WTC11 (cell line): ENCODE measurements at regions of chr20 and their contacts with region 1.

Region 1: DNA sequence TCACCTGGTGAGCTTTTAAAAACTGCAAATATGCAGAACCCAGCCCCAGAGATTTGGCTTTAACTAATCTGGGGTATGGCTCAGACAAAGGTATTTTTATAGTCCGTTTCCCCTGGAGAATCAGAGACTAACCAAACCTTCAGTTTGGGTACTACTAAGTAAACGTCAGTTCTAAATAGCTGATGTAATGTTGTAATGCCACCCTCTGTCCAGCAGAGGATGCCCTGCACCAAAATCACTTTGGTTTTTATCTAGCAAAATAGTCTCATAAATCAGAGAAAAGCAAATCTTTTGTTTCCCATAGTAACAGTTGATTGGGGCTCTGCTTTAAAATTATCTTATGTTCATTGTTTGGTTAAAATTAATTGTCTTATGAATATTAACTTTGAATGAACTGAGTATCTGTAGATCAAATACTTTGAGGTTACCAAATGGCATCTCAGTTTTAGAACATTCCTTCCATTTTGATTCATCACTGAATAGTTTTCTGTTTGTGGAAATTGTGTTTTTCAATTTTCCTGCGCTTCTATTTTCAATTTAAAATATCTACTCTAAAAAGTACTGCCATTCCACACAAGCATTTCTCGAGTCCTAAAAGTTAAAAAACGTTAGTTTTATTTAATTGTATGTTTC is 278.3 kb upstream of the PLCB4 start:
- DNase-seq: peak; percentile 42
- ATAC-seq: peak; percentile 60; the same call in 1 of the 2 replicates
- H3K4me3 Mint-ChIP-seq: no peak overlapping the region
- H3K27ac Mint-ChIP-seq: no peak overlapping the region
- H3K4me1 Mint-ChIP-seq: peaks cover 19% of the 10 kb centered on the region
- H3K27me3 Mint-ChIP-seq: peaks cover 5% of the 10 kb centered on the region; the same call in 1 of the 2 replicates
- CTCF ChIP-seq: peak; percentile 98

Region 2: DNA sequence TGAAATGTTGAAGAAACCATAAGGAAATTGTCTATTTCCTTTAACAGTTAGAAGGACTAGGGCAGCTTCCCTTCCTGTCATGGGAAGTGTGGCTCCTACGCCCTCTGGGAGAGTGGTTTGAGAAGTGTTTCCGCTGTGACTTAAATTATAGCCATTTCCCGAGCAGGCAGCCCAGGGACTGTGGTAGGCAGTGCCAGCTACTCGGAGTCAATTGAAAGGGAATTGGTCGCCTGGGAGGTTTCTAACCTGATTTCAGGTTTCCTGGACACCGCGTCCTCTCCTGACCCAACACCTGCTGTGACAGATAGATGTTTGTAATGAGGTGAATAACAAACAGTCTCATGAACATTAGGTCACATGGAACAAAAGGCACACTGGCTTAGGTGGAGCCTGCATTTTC is 22.3 kb after region 1 on chr20:
- CTCF ChIA-PET with region 1: interaction called, 14 read pairs
- POLR2A ChIA-PET with region 1: no interaction called
- DNase-seq: peak; percentile 22
- ATAC-seq: peak; percentile 79
- H3K4me3 Mint-ChIP-seq: no peak overlapping the region
- H3K27ac Mint-ChIP-seq: peak overlapping the region; percentile 84
- H3K4me1 Mint-ChIP-seq: peaks cover 53% of the 10 kb centered on the region
- H3K27me3 Mint-ChIP-seq: no peaks in the 10 kb centered on the region
- CTCF ChIP-seq: no peak